Panc1 (cell line): ENCODE measurements at regions of chr20 and their contacts with region 1.

Region 1: GRCh38 chr20:22490287-22491193 is 93.8 kb downstream of the FOXA2 start:
- DNase-seq: no peak
- ATAC-seq: peak; percentile 89
- H3K4me3 ChIP-seq: no peak overlapping the region
- H3K27ac ChIP-seq: peak overlapping the region; percentile 70
- H3K4me1 ChIP-seq: peaks cover 12% of the 10 kb centered on the region
- H3K27me3 ChIP-seq: no peaks in the 10 kb centered on the region
- CTCF ChIP-seq: peak; percentile 51

Region 2: DNA sequence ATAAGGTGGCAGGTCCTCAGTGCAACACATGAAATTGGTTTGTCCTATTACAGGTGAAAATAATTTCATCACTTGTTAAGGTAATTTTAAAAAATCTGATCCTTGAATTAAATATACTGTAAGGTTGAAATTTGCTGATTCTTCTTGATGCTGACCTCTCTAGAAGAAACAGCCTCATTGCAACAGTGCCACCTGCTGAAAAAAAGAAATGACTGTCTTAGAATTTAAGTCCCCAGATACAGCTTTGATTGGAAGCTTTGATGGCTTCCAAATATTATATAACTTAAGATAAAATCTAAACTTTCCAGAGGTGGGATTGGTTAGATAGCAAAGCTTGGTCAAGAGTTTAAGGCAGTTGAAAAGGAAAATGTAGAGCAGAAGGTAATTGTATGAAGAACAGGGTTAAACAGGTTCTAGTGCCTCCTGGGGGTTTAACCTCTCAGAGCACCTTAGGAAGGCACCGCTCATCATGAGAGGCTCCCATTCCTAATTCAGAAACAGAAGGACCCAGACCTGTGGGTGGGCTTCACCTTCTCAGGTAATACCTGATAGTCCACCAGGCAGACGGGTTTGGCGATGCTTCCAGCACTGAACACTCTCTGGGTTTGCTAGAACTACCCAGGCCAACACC is 384.1 kb before region 1 on chr20:
- CTCF ChIA-PET with region 1: no interaction called
- POLR2A ChIA-PET with region 1: no interaction called
- in situ Hi-C with region 1: no loop called
- intact Hi-C with region 1: no loop called
- DNase-seq: peak; percentile 12
- ATAC-seq: no peak
- H3K4me3 ChIP-seq: no peak overlapping the region
- H3K27ac ChIP-seq: no peak overlapping the region
- H3K4me1 ChIP-seq: no peaks in the 10 kb centered on the region
- H3K27me3 ChIP-seq: no peaks in the 10 kb centered on the region
- CTCF ChIP-seq: peak; percentile 63; the same call in 1 of the 2 replicates

Region 3: GRCh38 chr20:22511943-22512910 is 21.7 kb after region 1 on chr20:
- CTCF ChIA-PET with region 1: interaction called, 4 read pairs
- POLR2A ChIA-PET with region 1: interaction called, 11 read pairs
- in situ Hi-C with region 1: no loop called
- intact Hi-C with region 1: no loop called
- DNase-seq: no peak
- ATAC-seq: peak; percentile 96
- H3K4me3 ChIP-seq: peak overlapping the region in 1 of 2 experiments; percentile 10; a peak in 2 of 4 replicates
- H3K27ac ChIP-seq: peak overlapping the region; percentile 75
- H3K4me1 ChIP-seq: peaks cover 23% of the 10 kb centered on the region
- H3K27me3 ChIP-seq: no peaks in the 10 kb centered on the region
- CTCF ChIP-seq: no peak